GM10248 (cell line): ENCODE measurements at regions of chr3 and their contacts with region 1.

Region 1: DNA sequence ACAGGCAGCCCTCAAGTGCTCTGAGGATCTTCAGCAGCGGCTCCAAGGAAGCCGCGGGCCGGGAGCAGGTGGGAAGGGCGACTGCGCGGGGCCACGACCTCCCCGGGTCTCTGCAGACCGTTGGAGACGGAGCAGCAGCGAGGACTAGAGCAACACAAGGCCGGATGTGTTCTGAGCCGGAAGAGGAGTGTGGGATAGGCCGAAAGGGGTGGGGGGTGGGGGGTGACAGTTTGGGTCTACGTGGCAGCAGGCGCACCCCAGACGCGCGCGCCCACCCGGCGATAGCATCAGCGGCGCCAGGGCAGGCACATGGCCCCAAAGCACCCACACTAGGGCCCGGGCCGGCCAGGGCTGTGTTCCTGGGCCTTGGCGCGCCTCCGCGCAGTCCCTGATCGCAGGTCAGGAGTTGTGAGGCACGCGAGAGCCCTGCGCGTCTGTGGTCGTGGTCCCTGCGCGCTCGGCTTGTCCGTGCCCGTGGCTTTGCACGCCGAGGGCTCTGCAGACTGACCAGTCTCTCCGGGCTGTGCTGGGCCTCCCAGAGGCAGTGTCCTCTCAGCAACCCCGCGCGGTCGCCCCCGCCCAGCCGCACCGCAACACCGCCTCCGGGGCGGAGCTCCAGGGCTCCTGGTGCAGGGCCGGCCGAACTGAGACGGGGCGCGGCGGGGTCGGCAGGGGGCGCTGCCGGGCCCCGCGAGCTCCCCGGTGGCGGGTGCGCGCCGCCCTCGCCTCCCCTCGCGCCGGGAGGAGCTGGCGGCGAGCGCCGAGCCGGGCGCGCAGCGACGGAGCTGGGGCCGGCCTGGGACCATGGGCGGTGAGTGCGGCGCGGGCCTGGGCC is at the start of gene PXYLP1:
- DNase-seq: peak; percentile 96
- CTCF ChIP-seq: peak; percentile 84

Region 2: GRCh38 chr3:140995881-140996280 is 235.4 kb before region 1 on chr3:
- CTCF ChIA-PET with region 1: no interaction called
- POLR2A ChIA-PET with region 1: no interaction called
- DNase-seq: no peak
- CTCF ChIP-seq: no peak

Region 3: GRCh38 chr3:141218162-141218835 is 13.0 kb before region 1 on chr3:
- CTCF ChIA-PET with region 1: interaction called, 22 read pairs
- POLR2A ChIA-PET with region 1: no interaction called
- DNase-seq: no peak
- CTCF ChIP-seq: no peak

Region 4: DNA sequence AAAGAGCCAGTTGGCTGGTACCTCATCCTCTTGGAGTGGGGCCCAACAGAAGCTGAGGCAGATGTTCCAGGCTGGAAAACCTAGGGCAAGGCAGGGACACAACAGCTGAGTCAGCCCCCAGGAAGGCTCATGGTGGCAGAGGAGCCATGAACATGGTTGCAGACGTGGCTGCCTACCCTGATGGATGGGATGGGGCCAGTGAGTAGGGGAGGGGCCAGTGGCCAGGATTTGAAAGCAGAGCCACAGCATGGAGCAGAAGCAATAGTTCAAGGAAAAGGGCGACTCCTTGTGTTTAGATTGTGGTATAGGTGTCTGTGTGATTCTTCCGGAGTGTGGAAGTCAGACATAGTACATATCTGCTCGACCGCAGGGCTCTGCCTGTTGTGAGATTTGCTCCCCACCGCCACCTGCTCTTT is 24.5 kb after region 1 on chr3:
- CTCF ChIA-PET with region 1: interaction called, 24 read pairs
- POLR2A ChIA-PET with region 1: no interaction called
- DNase-seq: peak; percentile 32
- CTCF ChIP-seq: peak; percentile 17

Region 5: GRCh38 chr3:141286856-141287255 is 55.5 kb after region 1 on chr3:
- CTCF ChIA-PET with region 1: interaction called, 40 read pairs
- POLR2A ChIA-PET with region 1: no interaction called
- DNase-seq: peak; percentile 64
- CTCF ChIP-seq: no peak

Region 6: DNA sequence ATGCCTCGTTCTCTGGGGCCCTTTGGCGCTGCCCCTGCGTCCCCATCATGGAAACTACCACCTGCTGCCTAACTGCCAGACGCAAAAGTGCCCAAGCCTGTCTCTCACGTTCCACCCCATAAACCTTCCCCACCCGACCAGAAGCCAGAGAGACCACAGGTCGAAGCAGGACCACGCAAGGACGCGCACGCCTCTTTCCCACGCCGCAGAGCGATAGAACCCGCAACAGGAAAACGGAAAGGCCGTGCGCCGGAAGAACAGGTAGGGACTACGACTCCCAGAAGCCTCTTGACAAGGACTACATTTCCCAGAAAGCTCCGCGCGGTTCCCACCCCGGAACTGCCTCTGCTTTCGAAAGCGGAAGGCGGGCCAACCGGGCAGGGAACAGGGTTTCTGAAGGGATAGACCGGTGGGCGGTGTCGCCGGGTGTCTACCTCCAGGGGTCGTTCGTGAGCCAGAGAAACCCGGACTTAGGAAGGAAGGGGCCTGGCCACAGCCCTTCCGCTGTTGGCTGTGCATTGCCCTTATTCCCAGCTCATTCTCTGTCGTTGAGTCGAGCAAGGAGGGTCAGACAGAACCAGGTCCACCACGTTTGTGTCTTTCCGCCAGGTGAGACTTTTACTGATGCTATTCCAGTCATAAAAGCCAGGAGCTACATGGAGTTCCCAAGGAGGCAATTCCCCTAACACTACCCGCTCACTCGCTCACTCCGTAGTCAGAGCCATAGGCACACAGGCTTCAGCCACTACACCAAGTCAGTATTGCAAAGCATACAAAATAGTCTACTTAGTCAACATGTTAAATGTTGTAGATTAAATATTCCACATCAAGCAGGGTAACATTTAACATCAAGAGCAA is 80.4 kb after region 1 on chr3:
- CTCF ChIA-PET with region 1: interaction called, 22 read pairs
- POLR2A ChIA-PET with region 1: no interaction called
- DNase-seq: peak; percentile 98
- CTCF ChIP-seq: peak; percentile 88

Region 7: DNA sequence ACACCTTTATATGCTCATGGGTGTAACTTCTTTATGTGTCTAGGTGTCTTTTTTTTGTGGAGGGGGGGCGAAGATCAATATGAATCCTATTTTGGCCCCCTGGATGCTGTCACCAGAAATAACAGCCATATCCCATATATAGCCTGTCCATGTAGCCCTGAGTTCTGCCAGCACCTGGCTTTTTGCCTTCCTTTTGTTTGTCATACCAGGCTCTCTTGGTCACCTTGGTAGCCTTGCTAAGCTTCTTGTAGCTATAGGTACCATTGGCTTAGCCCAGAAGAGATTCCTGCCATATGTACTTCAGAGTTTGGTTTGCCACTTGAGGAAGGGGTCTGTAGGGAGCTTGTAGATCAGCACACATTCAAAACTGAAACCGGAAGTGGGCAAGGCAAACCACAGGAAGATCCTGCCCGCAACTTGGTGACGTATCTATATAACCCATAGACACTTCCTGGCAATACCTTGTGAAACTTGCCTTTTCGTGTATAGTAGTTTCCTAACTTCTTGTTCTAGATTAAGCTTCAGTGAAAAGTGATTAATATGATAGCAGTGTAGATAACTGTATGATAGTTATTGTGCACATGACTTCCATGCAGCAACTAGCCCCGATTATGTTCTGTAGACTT is 267.4 kb after region 1 on chr3:
- CTCF ChIA-PET with region 1: no interaction called
- POLR2A ChIA-PET with region 1: no interaction called
- DNase-seq: peak; percentile 25
- CTCF ChIP-seq: no peak